Transverse colon (tissue), 4 donors: ENCODE measurements at regions of chr14 and their contacts with region 1.

Region 1: GRCh38 chr14:56474419-56475022 is 105.1 kb upstream of the TMEM260 start:
- DNase-seq: no peak
- H3K4me3 ChIP-seq: no peak overlapping the region
- H3K27ac ChIP-seq: no peak overlapping the region
- H3K4me1 ChIP-seq: no peaks in the 10 kb centered on the region
- H3K27me3 ChIP-seq: no peaks in the 10 kb centered on the region
- CTCF ChIP-seq: peak; percentile 71 to 79 (median 72)
- EP300 ChIP-seq: no peak
- POLR2A ChIP-seq: no peak

Region 2: GRCh38 chr14:55430024-55430690 is 1044.4 kb before region 1 on chr14:
- in situ Hi-C with region 1: loop called in 3 of 4 experiments (anchors 25 kb)
- intact Hi-C with region 1: loop called (anchors 5 kb)
- DNase-seq: peak; percentile 36
- H3K4me3 ChIP-seq: no peak overlapping the region
- H3K27ac ChIP-seq: no peak overlapping the region
- H3K4me1 ChIP-seq: peaks cover 0 to 22% (median 6%) of the 10 kb centered on the region in 4 donors
- H3K27me3 ChIP-seq: no peaks in the 10 kb centered on the region
- CTCF ChIP-seq: peak; percentile 34 to 58 (median 36)
- EP300 ChIP-seq: no peak
- POLR2A ChIP-seq: no peak

Region 3: GRCh38 chr14:55707365-55707804 is 767.1 kb before region 1 on chr14:
- in situ Hi-C with region 1: loop called in 2 of 4 experiments (anchors 10 to 25 kb)
- intact Hi-C with region 1: loop called (anchors 10 kb)
- DNase-seq: no peak
- H3K4me3 ChIP-seq: no peak overlapping the region
- H3K27ac ChIP-seq: no peak overlapping the region
- H3K4me1 ChIP-seq: peaks cover 0 to 10% (median 2%) of the 10 kb centered on the region in 4 donors
- H3K27me3 ChIP-seq: no peaks in the 10 kb centered on the region
- CTCF ChIP-seq: peak; percentile 55 to 77 (median 64)
- EP300 ChIP-seq: no peak
- POLR2A ChIP-seq: no peak